CD8-positive, alpha-beta T cell (primary cell): ENCODE measurements at regions of chr12 and their contacts with region 1.

Region 1: GRCh38 chr12:21677622-21678277 is 20.1 kb upstream of the LDHB start:
- DNase-seq: peak in 5 of 9 experiments; percentile 10 to 65 (median 28)
- ATAC-seq: peak; percentile 39
- H3K4me3 ChIP-seq: peak overlapping the region; percentile 13 to 47
- H3K4me3 Mint-ChIP-seq: peak overlapping the region; percentile 76
- H3K27ac ChIP-seq: peak overlapping the region; percentile 17 to 32
- H3K27ac Mint-ChIP-seq: peak overlapping the region; percentile 91
- H3K4me1 ChIP-seq: peaks cover 54% of the 10 kb centered on the region
- H3K4me1 Mint-ChIP-seq: peaks cover 52% of the 10 kb centered on the region
- H3K27me3 ChIP-seq: no peaks in the 10 kb centered on the region
- H3K27me3 Mint-ChIP-seq: no peaks in the 10 kb centered on the region
- CTCF ChIP-seq: no peak

Region 2: GRCh38 chr12:21248679-21249078 is 429.1 kb before region 1 on chr12:
- CTCF ChIA-PET with region 1: no interaction called
- POLR2A ChIA-PET with region 1: no interaction called
- intact Hi-C with region 1: loop called (anchors 2 to 5 kb)
- DNase-seq: peak in 1 of 9 experiments; percentile 2
- ATAC-seq: no peak
- H3K4me3 ChIP-seq: no peak overlapping the region
- H3K4me3 Mint-ChIP-seq: no peak overlapping the region
- H3K27ac ChIP-seq: no peak overlapping the region
- H3K27ac Mint-ChIP-seq: no peak overlapping the region
- H3K4me1 ChIP-seq: no peaks in the 10 kb centered on the region
- H3K4me1 Mint-ChIP-seq: no peaks in the 10 kb centered on the region
- H3K27me3 ChIP-seq: no peaks in the 10 kb centered on the region
- H3K27me3 Mint-ChIP-seq: no peaks in the 10 kb centered on the region
- CTCF ChIP-seq: peak; percentile 20

Region 3: GRCh38 chr12:21501379-21501956 is 176.3 kb before region 1 on chr12 and contains the starts of genes GOLT1B and RECQL:
- CTCF ChIA-PET with region 1: no interaction called
- POLR2A ChIA-PET with region 1: no interaction called
- intact Hi-C with region 1: loop called (anchors 5 kb)
- DNase-seq: peak; percentile 74 to 98 (median 88)
- ATAC-seq: peak; percentile 94
- H3K4me3 ChIP-seq: peak within 1 kb of the TSS; percentile 89 to 95
- H3K4me3 Mint-ChIP-seq: no peak within 1 kb of the TSS
- H3K27ac ChIP-seq: peak within 1 kb of the TSS; percentile 83 to 84
- H3K27ac Mint-ChIP-seq: no peak within 1 kb of the TSS
- H3K4me1 ChIP-seq: peaks cover 35% of the 10 kb centered on the region
- H3K4me1 Mint-ChIP-seq: peaks cover 60% of the 10 kb centered on the region
- H3K27me3 ChIP-seq: no peaks in the 10 kb centered on the region
- H3K27me3 Mint-ChIP-seq: no peaks in the 10 kb centered on the region
- CTCF ChIP-seq: no peak
- total RNA-seq, gene GOLT1B: 45.2 to 52.9 TPM
- total RNA-seq, gene RECQL: 9.9 to 14.6 TPM

Region 4: GRCh38 chr12:21642707-21643389 is 34.9 kb before region 1 on chr12:
- CTCF ChIA-PET with region 1: interaction called, 17 read pairs
- POLR2A ChIA-PET with region 1: interaction called, 5 read pairs
- intact Hi-C with region 1: loop called in 1 of 2 experiments (anchors 5 kb)
- DNase-seq: no peak
- ATAC-seq: no peak
- H3K4me3 ChIP-seq: no peak overlapping the region
- H3K4me3 Mint-ChIP-seq: peak overlapping the region; percentile 0
- H3K27ac ChIP-seq: no peak overlapping the region
- H3K27ac Mint-ChIP-seq: peak overlapping the region; percentile 58
- H3K4me1 ChIP-seq: peaks cover 71% of the 10 kb centered on the region
- H3K4me1 Mint-ChIP-seq: peaks cover 87% of the 10 kb centered on the region
- H3K27me3 ChIP-seq: no peaks in the 10 kb centered on the region
- H3K27me3 Mint-ChIP-seq: no peaks in the 10 kb centered on the region
- CTCF ChIP-seq: no peak

Region 5: GRCh38 chr12:21690704-21691368 is 13.1 kb after region 1 on chr12:
- CTCF ChIA-PET with region 1: interaction called, 45 read pairs
- POLR2A ChIA-PET with region 1: interaction called, 6 read pairs
- intact Hi-C with region 1: no loop called
- DNase-seq: peak in 2 of 9 experiments; percentile 18 to 44
- ATAC-seq: peak; percentile 54
- H3K4me3 ChIP-seq: no peak overlapping the region
- H3K4me3 Mint-ChIP-seq: peak overlapping the region; percentile 0
- H3K27ac ChIP-seq: peak overlapping the region in 1 of 2 experiments; percentile 43
- H3K27ac Mint-ChIP-seq: peak overlapping the region; percentile 64
- H3K4me1 ChIP-seq: peaks cover 20% of the 10 kb centered on the region
- H3K4me1 Mint-ChIP-seq: peaks cover 26% of the 10 kb centered on the region
- H3K27me3 ChIP-seq: no peaks in the 10 kb centered on the region
- H3K27me3 Mint-ChIP-seq: no peaks in the 10 kb centered on the region
- CTCF ChIP-seq: no peak